AG04449 (cell line): ENCODE measurements at regions of chr10 and their contacts with region 1.

Region 1: GRCh38 chr10:11986593-11987216 is 55.9 kb downstream of the UPF2 start:
- DNase-seq: peak; percentile 40
- H3K4me3 ChIP-seq: no peak overlapping the region
- CTCF ChIP-seq: peak; percentile 79

Region 2: GRCh38 chr10:11793762-11794479 is 192.8 kb before region 1 on chr10:
- CTCF ChIA-PET with region 1: interaction called, 18 read pairs
- POLR2A ChIA-PET with region 1: no interaction called
- DNase-seq: peak; percentile 24
- H3K4me3 ChIP-seq: no peak overlapping the region
- CTCF ChIP-seq: no peak

Region 3: DNA sequence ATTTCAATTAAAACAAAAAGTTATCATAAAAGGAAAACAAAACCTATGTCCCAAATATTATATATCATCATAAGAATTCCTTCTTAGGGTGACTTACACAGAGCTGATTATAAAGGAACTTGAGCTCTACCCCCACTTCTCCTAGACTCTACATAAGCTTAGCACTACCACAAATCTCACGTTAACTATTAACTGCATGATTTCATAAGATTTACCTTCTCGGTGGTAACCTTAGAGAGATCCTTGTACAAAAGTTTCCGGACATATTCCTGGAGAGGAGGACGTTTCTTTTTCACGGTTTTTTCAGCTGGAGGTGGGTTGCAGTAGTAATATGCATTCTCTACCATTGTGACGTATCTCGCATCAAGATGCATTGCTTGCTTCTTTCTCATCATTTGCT is 27.7 kb before region 1 on chr10:
- CTCF ChIA-PET with region 1: interaction called, 16 read pairs
- POLR2A ChIA-PET with region 1: no interaction called
- DNase-seq: no peak
- H3K4me3 ChIP-seq: no peak overlapping the region
- CTCF ChIP-seq: no peak

Region 4: GRCh38 chr10:12006671-12007070 is 20.0 kb after region 1 on chr10:
- CTCF ChIA-PET with region 1: interaction called, 21 read pairs
- POLR2A ChIA-PET with region 1: no interaction called
- DNase-seq: no peak
- H3K4me3 ChIP-seq: no peak overlapping the region
- CTCF ChIP-seq: no peak

Region 5: DNA sequence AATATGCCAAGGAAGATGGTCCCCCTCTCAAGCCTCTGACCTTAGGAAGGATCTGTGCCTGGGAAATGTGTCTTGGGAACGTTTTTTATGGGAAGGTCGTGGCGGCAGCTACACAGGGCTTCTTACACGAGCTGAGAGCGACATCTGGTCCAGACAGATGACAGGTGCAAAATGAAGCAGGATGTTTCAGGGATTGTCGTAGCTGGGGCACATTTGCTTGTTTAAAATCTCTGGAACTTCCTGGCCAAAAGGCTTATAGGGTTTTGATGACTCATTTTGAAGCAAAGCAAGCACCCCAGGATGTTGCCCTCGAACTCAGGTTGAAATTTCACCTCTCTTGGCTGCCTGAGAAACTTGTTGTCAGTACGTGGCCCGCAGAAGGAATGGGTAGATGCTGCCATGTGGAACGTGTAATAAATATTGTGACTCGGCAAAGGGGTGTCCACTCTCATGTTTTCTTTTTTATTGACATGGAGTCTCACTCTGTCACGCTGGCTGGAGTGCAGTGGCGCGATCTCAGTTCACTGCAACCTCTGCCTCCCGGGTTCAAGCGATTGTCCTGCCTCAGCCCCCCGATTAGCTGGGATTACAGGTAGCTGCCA is 480.1 kb after region 1 on chr10:
- CTCF ChIA-PET with region 1: no interaction called
- POLR2A ChIA-PET with region 1: no interaction called
- DNase-seq: no peak
- H3K4me3 ChIP-seq: no peak overlapping the region
- CTCF ChIP-seq: no peak